Heart left ventricle (tissue), 16 donors: ENCODE measurements at regions of chr6 and their contacts with region 1.

Region 1: DNA sequence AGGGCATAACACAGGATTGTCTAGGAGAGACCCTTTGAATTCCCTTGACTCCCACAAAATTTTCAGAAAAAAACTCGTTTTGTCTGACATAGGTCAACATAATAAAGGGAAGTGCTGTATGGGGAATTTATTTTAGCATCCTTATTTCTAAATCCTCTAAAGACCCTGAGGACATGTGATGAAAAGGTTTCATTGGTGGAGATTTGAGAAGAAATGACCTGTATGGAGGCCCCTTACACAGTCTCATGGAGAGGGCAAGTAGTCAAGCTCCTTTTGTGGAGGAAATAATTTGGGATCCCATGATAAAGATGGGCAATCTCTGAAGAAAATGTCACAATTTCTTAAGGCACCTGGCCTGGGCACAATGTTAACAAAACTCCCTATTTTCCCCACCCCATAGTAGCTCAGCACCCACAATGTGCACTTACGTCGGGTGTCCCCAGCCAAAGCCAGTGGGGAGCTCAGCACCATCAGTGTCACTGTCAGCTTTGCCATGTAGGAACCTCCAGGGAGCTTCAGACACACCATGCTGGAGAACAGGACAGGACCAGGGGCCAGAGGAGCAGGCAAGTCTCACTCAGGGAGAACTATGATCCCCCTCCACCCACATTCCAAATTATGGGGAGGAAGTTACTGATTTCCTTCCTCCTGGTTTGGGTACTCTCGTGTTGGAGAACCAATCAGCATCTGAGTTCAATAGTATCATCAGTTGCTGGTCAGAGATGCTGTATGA is at the start of gene HLA-DRB5:
- DNase-seq: peak in 3 of 5 donors; percentile 33 to 63 (median 52)
- ATAC-seq: peak; percentile 58 to 99 (median 78)
- H3K4me3 ChIP-seq: peak within 1 kb of the TSS in 6 of 12 donors; percentile 12 to 56 (median 46)
- H3K27ac ChIP-seq: peak within 1 kb of the TSS in 10 of 12 donors; percentile 43 to 84 (median 62)
- H3K4me1 ChIP-seq: no peaks in the 10 kb centered on the region
- H3K27me3 ChIP-seq: no peaks in the 10 kb centered on the region
- CTCF ChIP-seq: no peak
- POLR2A ChIP-seq: no peak
- total RNA-seq, gene HLA-DRB5: 1.3 to 93.6 (median 50.7) TPM

Region 2: DNA sequence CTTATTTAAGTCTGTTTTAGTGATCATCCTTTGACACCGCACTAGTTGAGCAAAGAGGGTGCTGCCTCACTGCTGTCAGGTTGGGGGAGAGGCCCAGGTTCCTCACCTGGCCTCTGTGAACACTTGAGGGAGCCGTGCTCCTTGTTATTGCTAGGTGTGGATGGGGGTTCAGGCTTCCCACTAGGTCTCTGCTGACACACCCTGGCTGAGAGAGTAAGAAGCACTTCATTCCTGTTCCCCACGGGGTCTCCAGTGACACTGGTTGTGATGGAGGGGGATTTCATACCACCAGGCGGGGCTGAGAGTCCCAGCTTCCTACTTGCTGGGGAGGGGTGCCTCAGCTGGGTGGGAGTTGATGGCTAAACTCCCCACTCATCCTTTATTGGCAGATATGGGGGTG is 294.9 kb before region 1 on chr6:
- intact Hi-C with region 1: no loop called
- DNase-seq: no peak
- ATAC-seq: peak in 3 of 4 donors; percentile 42 to 84 (median 58)
- H3K4me3 ChIP-seq: no peak overlapping the region
- H3K27ac ChIP-seq: peak overlapping the region; percentile 43 to 89 (median 78)
- H3K4me1 ChIP-seq: peaks cover 0 to 15% (median 0%) of the 10 kb centered on the region in 12 donors
- H3K27me3 ChIP-seq: no peaks in the 10 kb centered on the region
- CTCF ChIP-seq: peak in 8 of 12 donors; percentile 9 to 45 (median 19)
- POLR2A ChIP-seq: no peak

Region 3: DNA sequence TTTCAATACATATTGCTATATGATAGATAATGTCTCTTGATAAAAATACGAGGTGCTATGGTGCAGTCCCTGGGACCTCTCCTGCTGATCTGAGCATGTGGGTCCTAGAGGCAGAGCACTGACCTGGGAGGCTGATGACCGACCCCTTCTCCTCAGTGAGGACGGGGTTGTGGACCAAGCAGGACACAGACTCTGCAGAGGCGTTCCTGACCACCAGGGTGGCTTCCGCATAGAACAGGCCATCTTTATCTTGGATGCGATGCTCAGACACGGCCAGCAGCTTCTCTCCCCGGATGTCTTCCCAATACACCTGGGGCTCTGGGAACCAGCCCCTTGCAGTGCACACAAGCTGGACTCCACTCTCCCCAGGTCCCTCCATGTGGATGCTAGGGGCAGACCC is 127.1 kb before region 1 on chr6:
- intact Hi-C with region 1: no loop called
- DNase-seq: no peak
- ATAC-seq: no peak
- H3K4me3 ChIP-seq: no peak overlapping the region
- H3K27ac ChIP-seq: no peak overlapping the region
- H3K4me1 ChIP-seq: no peaks in the 10 kb centered on the region
- H3K27me3 ChIP-seq: peaks cover 0 to 55% (median 8%) of the 10 kb centered on the region in 9 donors
- CTCF ChIP-seq: no peak
- POLR2A ChIP-seq: no peak

Region 4: DNA sequence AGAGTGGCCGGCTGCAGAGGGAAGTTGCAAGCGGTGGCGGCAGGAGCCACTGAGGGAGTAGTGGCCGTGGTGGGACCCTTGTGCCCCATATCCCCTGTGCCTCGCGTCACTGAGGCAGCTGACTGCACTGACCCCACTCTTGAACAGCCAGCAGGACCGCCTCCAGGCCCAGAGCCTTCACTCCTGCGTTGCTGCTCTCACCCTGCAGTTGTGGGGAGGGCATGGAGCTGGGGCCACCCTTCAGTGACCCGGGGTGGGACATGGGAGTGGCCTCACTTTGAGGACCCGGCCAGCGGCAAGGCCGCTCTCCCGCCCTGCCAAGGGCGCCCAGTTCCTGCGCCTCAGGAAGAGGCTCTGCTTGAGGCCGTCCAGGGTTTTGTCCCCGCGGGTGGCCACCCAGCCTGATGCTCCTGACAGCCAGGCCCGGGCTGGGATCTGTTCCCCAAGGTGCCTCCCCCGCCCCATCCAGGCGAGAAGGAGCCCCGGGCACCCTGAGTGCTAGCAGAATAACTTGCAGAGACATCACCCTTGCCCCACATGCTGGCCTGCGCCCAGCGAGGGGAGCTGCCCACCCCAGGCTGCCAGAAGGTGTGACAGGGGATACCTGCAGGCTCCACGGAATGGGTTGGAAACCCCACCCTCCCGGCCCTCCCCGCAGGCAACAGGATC is 45.8 kb before region 1 on chr6:
- intact Hi-C with region 1: loop called in 1 of 10 experiments (anchors 10 kb)
- DNase-seq: peak in 1 of 5 donors; percentile 43
- ATAC-seq: peak in 1 of 4 donors; percentile 42
- H3K4me3 ChIP-seq: no peak overlapping the region
- H3K27ac ChIP-seq: no peak overlapping the region
- H3K4me1 ChIP-seq: no peaks in the 10 kb centered on the region
- H3K27me3 ChIP-seq: peaks cover 0 to 4% (median 0%) of the 10 kb centered on the region in 9 donors
- CTCF ChIP-seq: no peak
- POLR2A ChIP-seq: no peak

Region 5: DNA sequence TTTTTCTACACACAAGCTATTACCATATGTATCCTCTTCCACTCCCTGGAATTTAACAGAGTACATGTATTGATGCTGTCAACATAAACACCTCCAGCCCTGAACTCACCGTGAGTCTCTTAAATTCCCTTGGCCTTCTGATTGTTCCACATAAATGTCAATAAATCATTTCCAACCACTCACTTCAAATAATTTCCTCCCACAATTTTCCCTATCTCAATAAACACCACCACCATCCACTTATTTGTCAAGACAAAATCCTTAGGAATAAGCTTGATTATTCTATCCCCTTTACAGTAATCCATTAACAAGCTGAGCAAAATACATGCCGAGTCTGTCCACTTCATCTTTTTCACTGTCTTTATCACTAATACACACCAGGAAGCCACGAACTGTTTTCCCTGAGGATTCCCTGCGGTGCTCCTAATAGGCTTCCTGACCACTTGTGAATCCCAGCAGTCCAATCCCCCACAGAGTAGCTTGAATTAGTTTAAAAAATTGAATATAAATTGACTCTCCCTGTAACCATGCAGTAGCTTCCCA is 40.6 kb after region 1 on chr6:
- intact Hi-C with region 1: loop called in 3 of 10 experiments (anchors 5 to 10 kb)
- DNase-seq: no peak
- ATAC-seq: no peak
- H3K4me3 ChIP-seq: no peak overlapping the region
- H3K27ac ChIP-seq: no peak overlapping the region
- H3K4me1 ChIP-seq: no peaks in the 10 kb centered on the region
- H3K27me3 ChIP-seq: no peaks in the 10 kb centered on the region
- CTCF ChIP-seq: no peak
- POLR2A ChIP-seq: no peak

Region 6: DNA sequence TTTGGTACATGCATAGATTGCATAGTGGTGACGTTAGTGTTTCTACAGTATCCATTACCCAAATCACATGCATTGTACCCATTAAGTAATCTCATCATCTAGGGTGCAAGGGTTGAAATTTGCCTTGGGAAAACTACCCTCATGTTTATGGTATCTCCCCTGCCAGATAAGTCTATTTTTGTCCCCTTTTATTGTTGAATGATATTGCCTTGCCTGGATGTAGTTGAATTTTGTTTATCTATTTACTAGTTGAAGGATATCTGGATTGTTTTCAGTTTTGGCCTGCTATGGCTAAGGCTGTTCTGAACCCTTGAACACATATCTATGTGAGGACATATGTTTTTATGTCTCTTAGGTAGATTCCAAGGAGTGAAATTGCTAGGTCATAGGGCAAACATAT is 46.4 kb after region 1 on chr6:
- intact Hi-C with region 1: loop called in 6 of 10 experiments (anchors 5 to 10 kb)
- DNase-seq: no peak
- ATAC-seq: no peak
- H3K4me3 ChIP-seq: no peak overlapping the region
- H3K27ac ChIP-seq: no peak overlapping the region
- H3K4me1 ChIP-seq: no peaks in the 10 kb centered on the region
- H3K27me3 ChIP-seq: peaks cover 0 to 7% (median 0%) of the 10 kb centered on the region in 9 donors
- CTCF ChIP-seq: no peak
- POLR2A ChIP-seq: no peak